ENCODE measurements at regions of chr10 and their contacts with region 1.

Region 1: GRCh38 chr10:126504063-126504739 is 115.9 kb upstream of the ADAM12 start:
- DNase-seq: peak; percentile 36
- ATAC-seq: peak; percentile 62 to 73

Region 2: GRCh38 chr10:125868372-125868975 is 635.7 kb before region 1 on chr10:
- intact Hi-C with region 1: loop called in 1 of 2 experiments (anchors 10 kb)
- DNase-seq: no peak
- ATAC-seq: peak; percentile 30 to 39

Region 3: GRCh38 chr10:125929618-125930017 is 574.6 kb before region 1 on chr10:
- intact Hi-C with region 1: loop called in 1 of 2 experiments (anchors 5 kb)
- DNase-seq: no peak
- ATAC-seq: no peak

Region 4: DNA sequence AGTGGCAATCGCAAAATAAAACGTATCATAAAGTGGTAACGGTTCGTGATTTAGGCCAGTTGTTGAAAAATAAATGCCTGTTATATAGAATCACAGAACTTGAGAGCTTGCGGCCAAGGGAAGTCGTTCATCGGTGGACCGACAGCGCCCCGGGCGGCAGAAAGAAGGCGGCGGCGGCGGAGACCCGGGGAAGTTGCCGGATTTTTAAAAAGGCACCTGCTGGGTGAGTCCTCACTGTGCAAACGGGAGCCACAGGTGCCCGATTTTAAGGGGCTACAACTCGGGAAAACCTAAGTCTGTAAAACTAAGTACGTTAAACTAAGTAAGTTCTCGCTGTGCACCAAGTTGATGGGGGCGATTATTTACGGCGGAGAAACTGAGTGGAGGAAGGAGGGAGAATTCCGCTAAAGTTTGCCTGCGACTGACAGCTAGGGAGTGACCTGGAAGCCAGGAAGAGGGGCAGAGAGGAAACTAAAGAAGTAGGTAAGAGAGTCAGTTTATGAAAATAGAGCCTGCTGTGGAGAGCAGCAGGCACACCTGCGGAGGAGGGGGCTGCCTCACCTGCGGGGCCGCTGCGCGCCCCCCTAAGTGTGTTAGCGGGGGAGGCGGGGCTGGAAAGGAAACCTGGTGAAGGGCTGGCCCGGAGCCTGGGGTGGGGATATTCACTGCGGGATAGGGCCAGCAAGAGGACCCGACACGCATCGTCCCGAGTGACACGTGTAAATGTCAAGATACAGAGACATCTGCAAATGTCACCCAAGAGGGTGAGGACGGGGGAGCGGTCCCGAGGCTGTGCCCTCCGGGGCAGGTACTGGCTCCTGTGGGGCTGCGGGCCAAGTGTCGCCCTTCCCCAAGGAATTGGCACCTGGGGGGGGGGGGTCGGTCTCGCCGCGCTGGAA is 116.9 kb before region 1 on chr10:
- intact Hi-C with region 1: loop called in 1 of 2 experiments (anchors 10 kb)
- DNase-seq: peak; percentile 63
- ATAC-seq: peak; percentile 56 to 64